Dorsolateral prefrontal cortex (tissue), 120 donors: ENCODE measurements at regions of chr12 and their contacts with region 1.

Region 1: GRCh38 chr12:71484272-71484905 is 44.8 kb downstream of the LGR5 start:
- DNase-seq: no peak
- H3K4me3 ChIP-seq: peak overlapping the region in 4 of 59 donors; percentile 3 to 33 (median 10)
- H3K27ac ChIP-seq: peak overlapping the region in 2 of 59 donors; percentile 8 to 27
- H3K27me3 ChIP-seq: peaks cover 0 to 4% (median 0%) of the 10 kb centered on the region in 45 donors
- CTCF ChIP-seq: peak in 2 of 56 donors; percentile 5 to 11

Region 2: DNA sequence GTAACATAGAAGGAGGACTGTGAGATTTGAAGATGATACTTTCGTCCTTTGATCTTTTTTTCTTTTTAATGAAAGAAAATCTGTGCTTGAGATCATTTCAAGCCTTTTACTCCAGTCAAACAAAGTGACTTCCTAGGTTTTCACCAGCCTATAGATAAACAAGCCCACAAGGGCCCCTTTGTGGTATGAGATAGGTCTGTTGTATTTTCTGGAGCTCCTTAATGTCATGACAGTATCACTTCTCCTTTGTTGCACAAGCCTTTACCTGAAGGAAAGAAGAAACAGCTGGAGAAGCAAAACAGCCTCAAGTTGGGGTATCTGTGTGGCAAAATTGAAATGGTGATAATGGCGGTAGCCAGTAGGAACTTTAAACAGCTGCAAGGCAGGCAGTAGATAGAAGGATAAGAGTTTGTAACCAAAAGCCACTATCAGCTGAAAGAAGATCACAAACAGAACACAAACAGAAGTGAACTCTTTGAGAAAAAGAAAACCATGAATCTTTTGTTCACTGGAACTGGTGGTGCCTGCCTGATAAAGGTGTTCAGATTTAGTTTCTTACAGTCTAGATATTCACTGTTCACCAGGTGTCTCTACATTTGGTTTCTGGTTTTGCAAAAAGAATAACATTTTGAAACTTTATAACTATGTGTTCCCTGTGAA is 52.0 kb after region 1 on chr12:
- intact Hi-C with region 1: loop called in 1 of 2 experiments (anchors 10 kb)
- DNase-seq: no peak
- H3K4me3 ChIP-seq: no peak overlapping the region
- H3K27ac ChIP-seq: peak overlapping the region in 48 of 59 donors; percentile 4 to 90 (median 58)
- H3K27me3 ChIP-seq: peaks cover 0 to 3% (median 0%) of the 10 kb centered on the region in 45 donors
- CTCF ChIP-seq: no peak